ENCODE measurements at regions of chr19 and their contacts with region 1.

Region 1: DNA sequence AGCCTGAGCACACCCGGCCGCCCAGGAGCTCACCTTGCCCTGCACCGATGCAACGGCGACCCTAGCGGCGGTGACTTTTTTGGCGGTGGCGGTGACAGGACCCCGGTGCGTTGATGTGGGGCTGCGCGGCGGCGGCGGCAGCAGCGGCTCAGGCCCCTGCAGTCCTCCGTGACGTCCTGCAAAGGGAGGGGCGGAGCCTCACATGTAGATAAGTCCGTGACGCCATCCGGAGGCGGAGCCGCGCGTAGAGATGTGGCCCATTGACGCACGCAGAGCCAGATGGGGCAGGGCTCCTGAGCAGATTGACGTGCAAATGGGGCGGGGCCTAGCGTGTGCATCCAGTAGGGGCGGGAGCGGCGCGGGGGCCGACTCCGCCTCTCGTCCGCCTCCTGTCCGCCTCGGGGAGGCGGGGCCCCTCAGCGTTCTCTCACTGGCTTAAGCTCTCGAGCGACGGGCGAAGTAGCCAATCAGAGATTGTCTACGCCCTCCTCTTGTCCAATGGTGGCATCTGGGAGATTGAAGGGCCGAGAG is at the start of gene RAB3A:
- DNase-seq: peak; percentile 100
- ATAC-seq: peak; percentile 94
- H3K4me3 Mint-ChIP-seq: peak within 1 kb of the TSS; percentile 96
- H3K27ac Mint-ChIP-seq: peak within 1 kb of the TSS; percentile 90
- H3K4me1 Mint-ChIP-seq: peaks cover 18% of the 10 kb centered on the region
- H3K27me3 Mint-ChIP-seq: no peaks in the 10 kb centered on the region
- total RNA-seq, gene RAB3A: 5.6 to 8.9 TPM

Region 2: GRCh38 chr19:18117692-18118378 is 86.1 kb before region 1 on chr19:
- CTCF ChIA-PET with region 1: no interaction called
- POLR2A ChIA-PET with region 1: no interaction called
- intact Hi-C with region 1: loop called in 1 of 2 experiments (anchors 1 kb)
- DNase-seq: peak; percentile 97
- ATAC-seq: peak; percentile 79
- H3K4me3 Mint-ChIP-seq: peak overlapping the region; percentile 74
- H3K27ac Mint-ChIP-seq: peak overlapping the region; percentile 84
- H3K4me1 Mint-ChIP-seq: peaks cover 35% of the 10 kb centered on the region
- H3K27me3 Mint-ChIP-seq: no peaks in the 10 kb centered on the region

Region 3: GRCh38 chr19:18192673-18193387 is 11.1 kb before region 1 on chr19 and contains the start of gene MPV17L2:
- CTCF ChIA-PET with region 1: interaction called, 13 read pairs
- POLR2A ChIA-PET with region 1: interaction called, 3 read pairs
- intact Hi-C with region 1: loop called (anchors 1 kb)
- DNase-seq: peak; percentile 99
- ATAC-seq: peak; percentile 95
- H3K4me3 Mint-ChIP-seq: peak within 1 kb of the TSS; percentile 79
- H3K27ac Mint-ChIP-seq: peak within 1 kb of the TSS; percentile 91
- H3K4me1 Mint-ChIP-seq: peaks cover 22% of the 10 kb centered on the region
- H3K27me3 Mint-ChIP-seq: no peaks in the 10 kb centered on the region
- total RNA-seq, gene MPV17L2: 5.7 to 6.2 TPM

Region 4: GRCh38 chr19:18281082-18282020 is 77.4 kb after region 1 on chr19 and contains the start of gene JUND:
- CTCF ChIA-PET with region 1: interaction called, 5 read pairs
- POLR2A ChIA-PET with region 1: interaction called, 15 read pairs
- intact Hi-C with region 1: loop called in 1 of 2 experiments (anchors 1 kb)
- DNase-seq: peak; percentile 98
- ATAC-seq: peak; percentile 69
- H3K4me3 Mint-ChIP-seq: peak within 1 kb of the TSS; percentile 86
- H3K27ac Mint-ChIP-seq: peak within 1 kb of the TSS; percentile 98
- H3K4me1 Mint-ChIP-seq: peaks cover 54% of the 10 kb centered on the region
- H3K27me3 Mint-ChIP-seq: no peaks in the 10 kb centered on the region
- total RNA-seq, gene JUND: 254 to 311 TPM

Region 5: GRCh38 chr19:18291590-18292461 is 87.9 kb after region 1 on chr19:
- CTCF ChIA-PET with region 1: no interaction called
- POLR2A ChIA-PET with region 1: no interaction called
- intact Hi-C with region 1: no loop called
- DNase-seq: peak; percentile 96
- ATAC-seq: peak; percentile 38
- H3K4me3 Mint-ChIP-seq: peak overlapping the region; percentile 87
- H3K27ac Mint-ChIP-seq: peak overlapping the region; percentile 99
- H3K4me1 Mint-ChIP-seq: peaks cover 63% of the 10 kb centered on the region
- H3K27me3 Mint-ChIP-seq: no peaks in the 10 kb centered on the region

Region 6: DNA sequence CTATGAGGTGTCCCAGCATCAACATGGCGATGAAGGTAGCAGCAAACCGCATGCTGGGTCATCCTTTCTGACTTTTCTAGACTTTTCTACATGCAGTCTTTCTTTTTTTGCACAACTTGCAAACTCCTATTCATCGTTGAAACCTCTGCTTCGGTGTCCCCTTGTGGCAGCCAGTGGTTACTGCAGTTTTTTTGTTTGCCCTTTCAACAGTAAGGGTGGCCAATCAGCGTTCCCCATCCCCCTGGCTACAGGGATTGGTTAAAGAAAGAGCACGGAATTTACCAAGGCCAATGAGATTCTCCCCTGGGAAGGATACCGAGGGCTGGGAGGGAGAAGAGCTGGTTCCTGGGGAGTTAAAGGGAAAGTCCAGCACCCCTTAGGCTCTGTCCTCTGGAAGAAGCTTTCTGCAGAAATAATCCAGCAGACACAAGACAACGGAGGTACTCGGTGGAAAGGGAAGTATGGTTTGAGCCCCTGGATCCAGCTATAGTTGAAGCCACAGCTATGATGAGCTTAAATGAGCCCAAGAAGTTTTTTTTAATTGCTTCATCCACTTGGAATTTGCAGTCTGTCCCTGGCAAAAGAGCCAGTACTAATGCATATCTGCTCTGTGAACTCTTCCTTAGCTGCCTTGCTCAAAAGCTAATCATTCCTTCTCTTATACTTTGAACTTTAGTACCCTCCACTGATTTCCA is 124.6 kb after region 1 on chr19:
- CTCF ChIA-PET with region 1: interaction called, 12 read pairs
- POLR2A ChIA-PET with region 1: no interaction called
- intact Hi-C with region 1: loop called in 1 of 2 experiments (anchors 1 kb)
- DNase-seq: peak; percentile 94
- ATAC-seq: peak; percentile 99
- H3K4me3 Mint-ChIP-seq: peak overlapping the region; percentile 65
- H3K27ac Mint-ChIP-seq: peak overlapping the region; percentile 69
- H3K4me1 Mint-ChIP-seq: peaks cover 20% of the 10 kb centered on the region
- H3K27me3 Mint-ChIP-seq: no peaks in the 10 kb centered on the region

Region 7: DNA sequence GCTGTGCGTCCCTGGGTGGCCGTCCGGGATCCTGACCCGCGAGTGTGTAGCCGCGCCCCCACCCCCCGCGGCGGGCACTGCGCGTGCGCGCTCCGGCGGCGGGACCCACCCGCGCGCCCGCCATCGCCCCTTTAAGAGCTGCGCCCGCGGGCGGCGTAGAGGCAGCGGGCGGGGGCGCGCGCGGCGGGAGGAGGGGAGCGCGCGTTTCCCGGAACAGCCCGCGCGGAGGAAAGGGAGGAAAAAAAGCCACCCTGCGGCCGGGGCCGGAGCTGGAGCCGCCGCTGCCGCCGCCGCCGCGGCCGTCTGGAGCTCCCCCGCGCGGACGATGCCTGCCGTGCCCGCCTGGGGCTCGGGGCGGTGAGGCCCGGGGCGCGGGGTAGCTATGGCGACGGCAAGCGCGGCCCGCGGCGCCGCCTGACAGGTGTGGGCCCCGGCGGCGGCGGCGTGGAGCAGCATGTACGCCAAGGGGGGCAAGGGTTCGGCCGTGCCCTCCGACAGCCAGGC is 215.3 kb after region 1 on chr19 and contains the start of gene SSBP4:
- CTCF ChIA-PET with region 1: no interaction called
- POLR2A ChIA-PET with region 1: no interaction called
- intact Hi-C with region 1: loop called in 1 of 2 experiments (anchors 2 kb)
- DNase-seq: peak; percentile 82
- ATAC-seq: peak; percentile 45
- H3K4me3 Mint-ChIP-seq: peak within 1 kb of the TSS; percentile 90
- H3K27ac Mint-ChIP-seq: peak within 1 kb of the TSS; percentile 80
- H3K4me1 Mint-ChIP-seq: peaks cover 79% of the 10 kb centered on the region
- H3K27me3 Mint-ChIP-seq: peaks cover 23% of the 10 kb centered on the region
- total RNA-seq, gene SSBP4: 71.7 to 79.3 TPM

Region 8: GRCh38 chr19:18496167-18496979 is 292.4 kb after region 1 on chr19:
- CTCF ChIA-PET with region 1: no interaction called
- POLR2A ChIA-PET with region 1: no interaction called
- intact Hi-C with region 1: no loop called
- DNase-seq: peak; percentile 79
- ATAC-seq: peak; percentile 96
- H3K4me3 Mint-ChIP-seq: peak overlapping the region; percentile 45
- H3K27ac Mint-ChIP-seq: peak overlapping the region; percentile 88
- H3K4me1 Mint-ChIP-seq: peaks cover 77% of the 10 kb centered on the region
- H3K27me3 Mint-ChIP-seq: no peaks in the 10 kb centered on the region

Measured in activated CD4-positive, alpha-beta T cell treated with anti-CD3 and anti-CD28 coated beads for 36 hours (primary cell).